A549 (cell line): ENCODE measurements at regions of chr14 and their contacts with region 1.

Region 1: GRCh38 chr14:67674481-67675169 is at the start of gene VTI1B:
- DNase-seq: peak; percentile 74 to 81
- ATAC-seq: peak; percentile 96
- H3K4me3 ChIP-seq: peak within 1 kb of the TSS; percentile 97
- H3K27ac ChIP-seq: peak within 1 kb of the TSS; percentile 96 to 99
- H3K4me1 ChIP-seq: peaks cover 26% of the 10 kb centered on the region; the same call in 2 of the 3 replicates
- CTCF ChIP-seq: peak; percentile 24; the same call in 1 of the 3 replicates
- EP300 ChIP-seq: no peak
- POLR2A ChIP-seq: peak; percentile 58
- RAD21 ChIP-seq: no peak; a peak in 1 of 5 replicates
- polyA plus RNA-seq, gene VTI1B: 77.2 and 102 TPM in 2 replicates

Region 2: GRCh38 chr14:67695394-67695949 is 20.8 kb after region 1 on chr14 and contains the start of gene RDH11:
- CTCF ChIA-PET with region 1: interaction called, 12 read pairs
- POLR2A ChIA-PET with region 1: interaction called, 21 read pairs
- DNase-seq: peak; percentile 89 to 94
- ATAC-seq: peak; percentile 98 to 99
- H3K4me3 ChIP-seq: peak within 1 kb of the TSS; percentile 96
- H3K27ac ChIP-seq: peak within 1 kb of the TSS; percentile 89 to 93
- H3K4me1 ChIP-seq: peaks cover 21% of the 10 kb centered on the region
- CTCF ChIP-seq: no peak
- EP300 ChIP-seq: no peak
- POLR2A ChIP-seq: peak; percentile 94
- RAD21 ChIP-seq: no peak
- polyA plus RNA-seq, gene RDH11: 132 and 146 TPM in 2 replicates